Heart left ventricle (tissue), 16 donors: ENCODE measurements at regions of chr4 and their contacts with region 1.

Region 1: DNA sequence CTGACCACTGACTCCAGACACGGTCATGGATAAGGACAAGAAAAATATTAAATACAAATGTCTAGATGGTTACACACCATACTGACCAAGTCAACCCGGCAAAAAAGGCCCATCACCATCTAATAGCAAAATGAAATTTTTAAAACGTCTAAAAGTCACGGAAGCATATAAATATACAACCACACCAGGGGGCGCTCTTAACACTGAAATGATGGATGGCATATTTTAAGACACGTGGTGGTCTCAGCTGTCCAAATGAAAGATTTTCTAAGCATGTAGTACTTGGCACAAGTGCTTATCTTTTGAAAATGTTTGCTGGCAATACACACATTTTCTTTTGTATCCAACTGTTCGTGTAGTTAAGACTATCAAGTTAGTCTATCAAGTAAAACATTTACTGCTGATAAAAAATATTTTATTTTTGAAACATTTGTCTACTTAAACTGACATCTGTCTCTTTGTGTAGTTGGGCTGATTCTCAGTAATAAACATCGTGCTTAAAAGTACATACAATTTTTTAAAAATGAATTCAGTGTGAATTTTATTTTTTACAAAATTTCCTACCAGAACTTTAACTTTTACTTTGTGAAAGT is 64.6 kb downstream of the COX7B2 start:
- DNase-seq: peak in 2 of 5 donors; percentile 11 to 28
- ATAC-seq: no peak
- H3K4me3 ChIP-seq: no peak overlapping the region
- H3K27ac ChIP-seq: no peak overlapping the region
- H3K4me1 ChIP-seq: peaks cover 0 to 8% (median 0%) of the 10 kb centered on the region in 12 donors
- H3K27me3 ChIP-seq: no peaks in the 10 kb centered on the region
- CTCF ChIP-seq: peak; percentile 27 to 74 (median 66)
- POLR2A ChIP-seq: no peak

Region 2: GRCh38 chr4:46804761-46805413 is 39.5 kb before region 1 on chr4:
- intact Hi-C with region 1: no loop called
- DNase-seq: no peak
- ATAC-seq: no peak
- H3K4me3 ChIP-seq: no peak overlapping the region
- H3K27ac ChIP-seq: no peak overlapping the region
- H3K4me1 ChIP-seq: no peaks in the 10 kb centered on the region
- H3K27me3 ChIP-seq: no peaks in the 10 kb centered on the region
- CTCF ChIP-seq: no peak
- POLR2A ChIP-seq: no peak

Region 3: GRCh38 chr4:46909078-46909477 is 64.7 kb after region 1 on chr4 and contains the start of gene COX7B2:
- intact Hi-C with region 1: no loop called
- DNase-seq: no peak
- ATAC-seq: no peak
- H3K4me3 ChIP-seq: no peak within 1 kb of the TSS
- H3K27ac ChIP-seq: no peak within 1 kb of the TSS
- H3K4me1 ChIP-seq: no peaks in the 10 kb centered on the region
- H3K27me3 ChIP-seq: no peaks in the 10 kb centered on the region
- CTCF ChIP-seq: no peak
- POLR2A ChIP-seq: no peak
- total RNA-seq, gene COX7B2: not detected

Region 4: GRCh38 chr4:47002593-47002992 is 158.2 kb after region 1 on chr4:
- intact Hi-C with region 1: loop called in 2 of 10 experiments (anchors 10 kb)
- DNase-seq: no peak
- ATAC-seq: peak in 2 of 4 donors; percentile 71 to 72
- H3K4me3 ChIP-seq: no peak overlapping the region
- H3K27ac ChIP-seq: no peak overlapping the region
- H3K4me1 ChIP-seq: peaks cover 0 to 12% (median 0%) of the 10 kb centered on the region in 12 donors
- H3K27me3 ChIP-seq: no peaks in the 10 kb centered on the region
- CTCF ChIP-seq: peak in 9 of 12 donors; percentile 10 to 58 (median 44)
- POLR2A ChIP-seq: no peak

Region 5: DNA sequence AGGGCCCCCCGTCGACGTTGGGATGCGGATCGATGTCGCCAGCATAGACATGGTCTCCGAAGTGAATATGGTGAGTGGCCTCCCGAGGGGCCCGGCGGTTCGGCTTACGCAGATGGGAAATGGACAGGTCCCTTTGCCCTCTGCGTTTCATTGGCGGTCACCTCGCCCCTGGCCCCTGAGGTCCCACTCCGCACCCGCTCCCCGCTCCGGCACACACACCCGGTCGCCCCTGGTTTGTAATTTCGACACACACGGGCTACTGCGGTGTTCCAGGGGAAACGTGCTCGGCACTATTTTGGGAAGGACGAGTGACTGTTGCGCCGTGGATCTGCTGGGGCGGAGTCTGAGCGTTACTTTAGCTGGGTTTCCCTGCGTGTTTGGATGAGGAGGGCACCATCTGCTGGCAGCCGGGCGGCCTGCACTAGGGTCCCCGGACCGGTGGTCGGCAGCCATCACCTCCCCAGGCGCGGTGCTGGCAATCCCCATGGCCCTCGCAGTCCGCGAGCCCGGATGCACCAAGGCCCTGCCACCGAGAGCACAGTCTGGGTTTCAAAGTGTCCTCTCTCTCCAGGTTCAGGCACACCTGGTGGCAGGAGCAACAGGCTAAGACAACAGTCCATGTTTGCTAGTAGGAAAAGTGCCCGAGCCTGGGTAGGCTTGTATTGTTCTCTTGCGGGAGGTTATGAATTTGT is 188.1 kb after region 1 on chr4:
- intact Hi-C with region 1: loop called in 9 of 10 experiments (anchors 2 to 10 kb)
- DNase-seq: peak; percentile 52 to 81 (median 77)
- ATAC-seq: peak; percentile 89 to 95 (median 94)
- H3K4me3 ChIP-seq: peak overlapping the region; percentile 11 to 64 (median 56)
- H3K27ac ChIP-seq: peak overlapping the region in 9 of 12 donors; percentile 39 to 81 (median 74)
- H3K4me1 ChIP-seq: peaks cover 0 to 16% (median 0%) of the 10 kb centered on the region in 12 donors
- H3K27me3 ChIP-seq: peaks cover 0 to 56% (median 5%) of the 10 kb centered on the region in 9 donors
- CTCF ChIP-seq: peak; percentile 43 to 78 (median 59)
- POLR2A ChIP-seq: no peak

Region 6: GRCh38 chr4:47122592-47123291 is 278.3 kb after region 1 on chr4:
- intact Hi-C with region 1: loop called in 6 of 10 experiments (anchors 2 to 10 kb)
- DNase-seq: peak in 4 of 5 donors; percentile 24 to 44 (median 24)
- ATAC-seq: peak; percentile 52 to 76 (median 64)
- H3K4me3 ChIP-seq: no peak overlapping the region
- H3K27ac ChIP-seq: no peak overlapping the region
- H3K4me1 ChIP-seq: peaks cover 0 to 3% (median 0%) of the 10 kb centered on the region in 12 donors
- H3K27me3 ChIP-seq: no peaks in the 10 kb centered on the region
- CTCF ChIP-seq: peak; percentile 58 to 89 (median 73)
- POLR2A ChIP-seq: no peak

Region 7: DNA sequence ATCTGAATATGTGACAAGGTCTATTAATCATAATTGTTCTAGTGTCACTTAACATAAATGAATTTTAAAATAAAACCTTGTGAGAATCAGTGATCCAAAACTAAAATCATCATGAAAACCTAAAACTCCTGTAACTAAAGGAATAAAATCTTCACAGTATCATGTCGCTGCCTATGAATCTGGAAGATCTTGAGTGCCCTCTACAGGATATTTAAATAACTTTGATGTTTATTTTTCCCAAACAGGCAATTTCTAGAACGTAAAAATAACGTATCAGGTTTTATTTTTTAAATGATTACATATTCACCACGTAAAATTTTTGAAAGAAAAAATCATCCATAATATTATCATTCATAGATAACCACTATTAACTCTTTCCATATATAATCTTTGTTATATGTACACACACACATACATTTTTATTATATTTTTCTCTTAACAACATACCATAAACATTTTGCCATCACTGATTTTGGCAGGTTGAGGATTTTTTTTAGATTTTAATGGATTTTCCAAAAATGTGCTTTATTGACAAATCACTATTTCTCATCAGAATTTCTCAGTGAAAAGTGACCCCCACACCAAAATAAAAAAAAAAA is 539.5 kb after region 1 on chr4:
- intact Hi-C with region 1: loop called in 9 of 10 experiments (anchors 2 to 10 kb)
- DNase-seq: no peak
- ATAC-seq: no peak
- H3K4me3 ChIP-seq: no peak overlapping the region
- H3K27ac ChIP-seq: no peak overlapping the region
- H3K4me1 ChIP-seq: no peaks in the 10 kb centered on the region
- H3K27me3 ChIP-seq: no peaks in the 10 kb centered on the region
- CTCF ChIP-seq: peak in 11 of 12 donors; percentile 26 to 73 (median 53)
- POLR2A ChIP-seq: no peak

Region 8: DNA sequence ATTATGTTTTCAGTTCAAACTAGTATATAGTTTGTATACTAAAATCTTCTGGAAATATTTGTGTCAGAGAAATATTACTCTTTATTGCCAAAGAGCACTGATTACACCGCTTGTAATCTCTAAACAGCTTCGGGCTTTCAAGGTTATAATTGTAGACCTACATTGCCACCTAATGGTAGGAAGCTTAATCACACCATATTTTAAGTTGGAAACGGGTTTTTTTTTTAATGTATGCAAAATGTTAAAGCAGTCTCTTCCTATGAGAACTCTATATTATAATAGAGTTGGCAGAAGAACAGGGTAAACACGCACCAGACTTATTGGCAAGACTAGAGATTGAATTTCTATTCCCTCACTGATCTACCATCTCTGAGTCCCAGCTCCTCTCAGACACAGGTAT is 1089.4 kb after region 1 on chr4:
- intact Hi-C with region 1: loop called in 3 of 10 experiments (anchors 10 kb)
- DNase-seq: no peak
- ATAC-seq: peak in 1 of 4 donors; percentile 58
- H3K4me3 ChIP-seq: no peak overlapping the region
- H3K27ac ChIP-seq: no peak overlapping the region
- H3K4me1 ChIP-seq: peaks cover 0 to 5% (median 0%) of the 10 kb centered on the region in 12 donors
- H3K27me3 ChIP-seq: peaks cover 0 to 7% (median 0%) of the 10 kb centered on the region in 9 donors
- CTCF ChIP-seq: peak; percentile 44 to 77 (median 66)
- POLR2A ChIP-seq: no peak